Heart left ventricle (tissue), 16 donors: ENCODE measurements at regions of chr3 and their contacts with region 1.

Region 1: GRCh38 chr3:152595975-152596790 is 238.7 kb upstream of the P2RY1 start:
- DNase-seq: peak in 4 of 5 donors; percentile 34 to 69 (median 60)
- ATAC-seq: peak; percentile 93 to 97 (median 95)
- H3K4me3 ChIP-seq: peak overlapping the region in 7 of 12 donors; percentile 6 to 26 (median 11)
- H3K27ac ChIP-seq: peak overlapping the region; percentile 47 to 86 (median 78)
- H3K4me1 ChIP-seq: peaks cover 0 to 33% (median 14%) of the 10 kb centered on the region in 12 donors
- H3K27me3 ChIP-seq: no peaks in the 10 kb centered on the region
- CTCF ChIP-seq: no peak
- POLR2A ChIP-seq: no peak

Region 2: DNA sequence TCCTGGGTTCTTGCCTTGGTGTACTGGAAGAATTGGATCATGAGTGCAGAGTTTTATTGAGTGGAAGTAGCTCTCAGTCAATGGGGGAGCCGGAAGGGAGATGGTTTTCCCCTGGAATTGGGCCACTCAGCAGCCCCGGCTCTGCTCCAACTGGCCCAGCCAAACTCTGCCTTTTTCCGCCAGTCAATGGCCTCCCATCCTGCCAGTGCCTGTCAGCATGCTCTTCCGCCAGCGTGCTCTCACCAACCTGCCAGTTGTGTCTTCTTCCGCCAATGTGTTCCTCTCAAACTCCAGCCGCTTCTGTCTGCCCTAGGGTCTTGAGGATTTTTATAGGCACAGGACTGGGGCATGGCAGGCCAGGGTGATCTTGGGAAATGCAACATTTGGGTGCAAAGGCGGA is 874.9 kb before region 1 on chr3:
- intact Hi-C with region 1: no loop called
- DNase-seq: no peak
- ATAC-seq: no peak
- H3K4me3 ChIP-seq: no peak overlapping the region
- H3K27ac ChIP-seq: no peak overlapping the region
- H3K4me1 ChIP-seq: no peaks in the 10 kb centered on the region
- H3K27me3 ChIP-seq: no peaks in the 10 kb centered on the region
- CTCF ChIP-seq: no peak
- POLR2A ChIP-seq: no peak

Region 3: GRCh38 chr3:152205097-152205593 is 391.0 kb before region 1 on chr3:
- intact Hi-C with region 1: no loop called
- DNase-seq: no peak
- ATAC-seq: peak in 2 of 4 donors; percentile 38 to 52
- H3K4me3 ChIP-seq: peak overlapping the region in 7 of 12 donors; percentile 4 to 55 (median 24)
- H3K27ac ChIP-seq: peak overlapping the region in 5 of 12 donors; percentile 32 to 89 (median 73)
- H3K4me1 ChIP-seq: peaks cover 0 to 54% (median 14%) of the 10 kb centered on the region in 12 donors
- H3K27me3 ChIP-seq: no peaks in the 10 kb centered on the region
- CTCF ChIP-seq: no peak
- POLR2A ChIP-seq: no peak

Region 4: GRCh38 chr3:152556731-152557254 is 39.4 kb before region 1 on chr3:
- intact Hi-C with region 1: loop called in 1 of 10 experiments (anchors 2 kb)
- DNase-seq: peak in 4 of 5 donors; percentile 39 to 62 (median 46)
- ATAC-seq: peak; percentile 81 to 94 (median 93)
- H3K4me3 ChIP-seq: no peak overlapping the region
- H3K27ac ChIP-seq: peak overlapping the region; percentile 71 to 90 (median 82)
- H3K4me1 ChIP-seq: peaks cover 2 to 51% (median 38%) of the 10 kb centered on the region in 12 donors
- H3K27me3 ChIP-seq: no peaks in the 10 kb centered on the region
- CTCF ChIP-seq: no peak
- POLR2A ChIP-seq: no peak

Region 5: GRCh38 chr3:153503873-153504272 is 907.7 kb after region 1 on chr3:
- intact Hi-C with region 1: no loop called
- DNase-seq: no peak
- ATAC-seq: no peak
- H3K4me3 ChIP-seq: no peak overlapping the region
- H3K27ac ChIP-seq: no peak overlapping the region
- H3K4me1 ChIP-seq: no peaks in the 10 kb centered on the region
- H3K27me3 ChIP-seq: no peaks in the 10 kb centered on the region
- CTCF ChIP-seq: no peak
- POLR2A ChIP-seq: no peak